K562 (cell line): ENCODE measurements at regions of chr1 and their contacts with region 1.

Region 1: DNA sequence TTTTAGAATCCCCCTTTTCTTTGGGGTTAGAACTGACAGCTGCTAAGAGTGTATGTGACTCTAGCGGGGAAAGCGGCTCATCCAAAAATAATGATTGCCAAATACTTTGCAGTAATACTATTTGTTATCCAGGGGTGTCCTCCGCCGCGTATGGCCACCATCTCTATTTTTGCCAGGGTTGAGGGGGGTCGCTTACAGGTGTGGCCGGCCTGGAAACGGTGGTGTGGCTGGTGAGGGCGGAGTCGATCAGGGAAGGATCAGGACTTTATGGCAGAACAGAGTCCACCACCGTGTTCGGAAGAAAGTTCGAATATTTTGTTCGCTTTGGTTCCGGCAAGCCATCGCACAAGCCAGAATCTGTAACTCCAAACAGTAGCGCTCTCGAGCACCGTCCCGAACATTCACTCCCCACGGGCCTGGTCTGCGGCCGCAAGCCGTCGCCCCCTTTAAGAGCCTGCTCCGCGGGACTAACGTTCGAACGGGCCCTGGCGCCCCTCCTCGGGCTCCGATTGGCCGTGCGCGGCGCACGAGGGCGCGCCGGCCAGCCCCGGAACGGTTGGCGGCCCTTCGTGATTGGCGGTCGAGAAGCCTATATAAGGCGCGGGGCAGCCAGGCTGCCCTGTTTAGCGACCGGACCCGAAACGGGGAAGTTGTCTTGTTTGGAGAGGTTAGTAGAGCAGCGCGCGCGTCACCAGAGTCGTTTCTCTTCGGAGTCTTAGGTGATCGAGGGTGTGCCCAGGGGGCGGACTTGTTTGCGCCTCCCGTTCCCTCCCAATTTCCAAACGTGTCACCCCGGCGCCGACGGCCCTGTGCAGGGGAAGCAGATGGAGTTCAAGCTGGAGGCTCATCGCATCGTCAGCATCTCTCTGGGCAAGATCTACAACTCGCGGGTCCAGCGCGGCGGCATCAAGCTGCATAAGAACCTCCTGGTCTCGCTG is at the start of gene IER5:
- DNase-seq: peak; percentile 98 to 99 (median 98)
- ATAC-seq: peak; percentile 89
- H3K4me3 ChIP-seq: peak within 1 kb of the TSS; percentile 84
- H3K27ac ChIP-seq: peak within 1 kb of the TSS; percentile 82
- H3K4me1 ChIP-seq: peaks cover 21 to 39% of the 10 kb centered on the region in 2 experiments
- H3K27me3 ChIP-seq: no peaks in the 10 kb centered on the region
- CTCF ChIP-seq: no peak; a peak in 1 of 6 replicates
- EP300 ChIP-seq: peak; percentile 67
- POLR2A ChIP-seq: peak; percentile 100
- RAD21 ChIP-seq: peak; percentile 28 to 29; a peak in 3 of 4 replicates
- polyA plus RNA-seq, gene IER5: 2.4 to 2.5 TPM

Region 2: GRCh38 chr1:180515864-180516388 is 572.4 kb before region 1 on chr1:
- CTCF ChIA-PET with region 1: no interaction called
- POLR2A ChIA-PET with region 1: no interaction called
- in situ Hi-C with region 1: no loop called
- intact Hi-C with region 1: loop called (anchors 5 kb)
- DNase-seq: peak; percentile 82 to 95 (median 86)
- ATAC-seq: peak; percentile 98
- H3K4me3 ChIP-seq: no peak overlapping the region
- H3K27ac ChIP-seq: peak overlapping the region; percentile 10; the same call in 1 of the 3 replicates
- H3K4me1 ChIP-seq: peaks cover 3 to 9% of the 10 kb centered on the region in 2 experiments; a peak in 3 of 5 replicates
- H3K27me3 ChIP-seq: no peaks in the 10 kb centered on the region
- CTCF ChIP-seq: peak; percentile 93 to 97 (median 94)
- EP300 ChIP-seq: peak; percentile 32; the same call in 1 of the 2 replicates
- POLR2A ChIP-seq: no peak
- RAD21 ChIP-seq: peak; percentile 98 to 99

Region 3: GRCh38 chr1:181033799-181034451 is 54.4 kb before region 1 on chr1 and contains the start of gene MR1:
- CTCF ChIA-PET with region 1: no interaction called
- POLR2A ChIA-PET with region 1: interaction called, 5 read pairs
- in situ Hi-C with region 1: no loop called
- intact Hi-C with region 1: loop called (anchors 2 kb)
- DNase-seq: peak; percentile 87 to 91 (median 89)
- ATAC-seq: peak; percentile 93
- H3K4me3 ChIP-seq: peak within 1 kb of the TSS; percentile 42
- H3K27ac ChIP-seq: peak within 1 kb of the TSS; percentile 74
- H3K4me1 ChIP-seq: peaks cover 9 to 36% of the 10 kb centered on the region in 2 experiments; a peak in 4 of 5 replicates
- H3K27me3 ChIP-seq: no peaks in the 10 kb centered on the region
- CTCF ChIP-seq: no peak
- EP300 ChIP-seq: no peak
- POLR2A ChIP-seq: peak; percentile 84
- RAD21 ChIP-seq: no peak
- polyA plus RNA-seq, gene MR1: 15.6 to 19.8 TPM

Region 4: DNA sequence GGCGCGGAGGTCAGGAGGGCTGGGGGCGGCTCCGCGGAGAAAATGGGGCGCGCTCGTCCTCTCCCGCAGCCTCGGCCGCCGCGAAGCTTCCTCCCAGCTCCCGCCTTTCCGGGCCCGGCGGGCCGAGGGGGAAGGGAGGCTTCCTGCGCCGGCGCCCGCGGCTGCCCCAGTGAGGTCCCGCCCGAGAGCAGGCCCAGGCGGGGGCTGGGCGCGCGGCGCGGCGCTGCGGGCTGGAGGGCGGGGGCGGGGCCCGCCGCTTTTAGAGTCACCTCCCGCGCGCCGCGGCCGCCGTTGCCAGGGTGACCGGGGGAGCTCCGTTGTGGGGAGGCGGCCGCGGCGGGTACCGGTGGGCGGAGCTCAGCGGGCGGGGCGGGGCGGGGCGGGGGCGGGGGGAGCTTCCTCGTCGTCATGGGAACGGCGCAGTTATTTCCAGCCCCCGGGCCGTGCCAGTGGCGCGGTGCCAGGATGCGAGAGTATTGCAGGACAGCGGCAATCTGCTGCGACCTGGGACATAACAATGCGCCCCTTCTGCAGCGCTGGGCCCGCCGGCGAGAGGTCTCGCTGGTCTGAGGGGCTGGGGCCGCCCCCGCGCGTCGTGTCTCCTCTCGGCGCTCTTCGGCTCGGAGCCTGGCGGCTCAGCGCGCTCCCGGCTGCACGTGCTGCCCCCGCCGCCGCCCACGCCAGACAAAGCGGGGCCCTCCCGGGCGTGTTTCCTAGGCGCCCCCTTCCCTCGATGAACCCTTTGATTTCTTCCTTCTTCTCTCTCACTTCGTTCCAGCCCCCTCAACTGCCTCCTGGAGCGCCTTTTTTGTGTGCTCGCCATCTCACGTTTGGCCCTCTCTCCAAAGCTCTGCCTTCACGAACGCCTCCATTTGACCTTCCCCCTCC is 17.0 kb after region 1 on chr1:
- CTCF ChIA-PET with region 1: no interaction called
- POLR2A ChIA-PET with region 1: interaction called, 257 read pairs
- in situ Hi-C with region 1: no loop called
- intact Hi-C with region 1: loop called (anchors 1 kb)
- DNase-seq: peak; percentile 97 to 99 (median 99)
- ATAC-seq: peak; percentile 95
- H3K4me3 ChIP-seq: peak overlapping the region; percentile 63
- H3K27ac ChIP-seq: peak overlapping the region; percentile 86
- H3K4me1 ChIP-seq: peaks cover 25 to 65% of the 10 kb centered on the region in 2 experiments
- H3K27me3 ChIP-seq: no peaks in the 10 kb centered on the region
- CTCF ChIP-seq: no peak
- EP300 ChIP-seq: no peak
- POLR2A ChIP-seq: peak; percentile 81
- RAD21 ChIP-seq: peak in 1 of 2 experiments; percentile 33; a peak in 2 of 4 replicates

Region 5: GRCh38 chr1:181134543-181135362 is 46.4 kb after region 1 on chr1:
- CTCF ChIA-PET with region 1: interaction called, 3 read pairs
- POLR2A ChIA-PET with region 1: interaction called, 52 read pairs
- in situ Hi-C with region 1: no loop called
- intact Hi-C with region 1: no loop called
- DNase-seq: no peak
- ATAC-seq: no peak
- H3K4me3 ChIP-seq: no peak overlapping the region
- H3K27ac ChIP-seq: no peak overlapping the region
- H3K4me1 ChIP-seq: peaks cover 40 to 53% of the 10 kb centered on the region in 2 experiments
- H3K27me3 ChIP-seq: no peaks in the 10 kb centered on the region
- CTCF ChIP-seq: no peak
- EP300 ChIP-seq: no peak
- POLR2A ChIP-seq: no peak
- RAD21 ChIP-seq: no peak

Region 6: GRCh38 chr1:181166377-181167196 is 78.2 kb after region 1 on chr1:
- CTCF ChIA-PET with region 1: interaction called, 7 read pairs
- POLR2A ChIA-PET with region 1: interaction called, 6 read pairs
- in situ Hi-C with region 1: no loop called
- intact Hi-C with region 1: loop called (anchors 1 kb)
- DNase-seq: peak; percentile 82 to 90 (median 84)
- ATAC-seq: peak; percentile 100
- H3K4me3 ChIP-seq: no peak overlapping the region
- H3K27ac ChIP-seq: no peak overlapping the region; the same call in 2 of the 3 replicates
- H3K4me1 ChIP-seq: no peaks in the 10 kb centered on the region; a peak in 1 of 5 replicates
- H3K27me3 ChIP-seq: no peaks in the 10 kb centered on the region
- CTCF ChIP-seq: peak; percentile 89 to 97 (median 94)
- EP300 ChIP-seq: no peak; the same call in 1 of the 2 replicates
- POLR2A ChIP-seq: no peak
- RAD21 ChIP-seq: peak; percentile 96 to 99

Region 7: DNA sequence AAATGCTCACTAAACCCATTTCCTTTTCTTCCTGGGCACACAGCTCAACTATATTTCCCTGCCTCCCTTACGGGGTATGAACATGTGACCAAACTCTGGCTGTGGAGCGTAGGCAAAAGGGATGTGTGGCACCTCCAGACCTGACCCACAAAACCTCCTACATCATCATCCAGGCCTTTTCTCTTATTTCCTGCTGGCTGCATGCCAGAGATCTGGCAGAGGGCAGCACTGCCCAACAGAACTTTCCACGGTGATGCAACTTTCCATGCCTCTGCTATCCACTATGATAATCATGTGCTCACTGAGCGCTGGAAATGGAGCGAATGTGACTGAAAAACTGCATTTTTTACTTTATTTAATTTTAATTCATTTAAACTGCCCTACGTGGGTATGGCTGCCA is 295.4 kb after region 1 on chr1:
- CTCF ChIA-PET with region 1: no interaction called
- POLR2A ChIA-PET with region 1: no interaction called
- in situ Hi-C with region 1: no loop called
- intact Hi-C with region 1: no loop called
- DNase-seq: no peak
- ATAC-seq: no peak
- H3K4me3 ChIP-seq: no peak overlapping the region
- H3K27ac ChIP-seq: no peak overlapping the region
- H3K4me1 ChIP-seq: no peaks in the 10 kb centered on the region
- H3K27me3 ChIP-seq: peaks cover 3 to 18% of the 10 kb centered on the region in 2 experiments
- CTCF ChIP-seq: no peak
- EP300 ChIP-seq: no peak
- POLR2A ChIP-seq: no peak
- RAD21 ChIP-seq: no peak